ENCODE measurements at regions of chr2 and their contacts with region 1.

Region 1: GRCh38 chr2:157898591-157898996 is 22.5 kb upstream of the ACVR1 start:
- DNase-seq: peak; percentile 87
- H3K4me3 Mint-ChIP-seq: peak overlapping the region; percentile 76
- H3K27ac Mint-ChIP-seq: peak overlapping the region; percentile 99
- H3K4me1 Mint-ChIP-seq: peaks cover 77% of the 10 kb centered on the region
- H3K27me3 Mint-ChIP-seq: no peaks in the 10 kb centered on the region

Region 2: DNA sequence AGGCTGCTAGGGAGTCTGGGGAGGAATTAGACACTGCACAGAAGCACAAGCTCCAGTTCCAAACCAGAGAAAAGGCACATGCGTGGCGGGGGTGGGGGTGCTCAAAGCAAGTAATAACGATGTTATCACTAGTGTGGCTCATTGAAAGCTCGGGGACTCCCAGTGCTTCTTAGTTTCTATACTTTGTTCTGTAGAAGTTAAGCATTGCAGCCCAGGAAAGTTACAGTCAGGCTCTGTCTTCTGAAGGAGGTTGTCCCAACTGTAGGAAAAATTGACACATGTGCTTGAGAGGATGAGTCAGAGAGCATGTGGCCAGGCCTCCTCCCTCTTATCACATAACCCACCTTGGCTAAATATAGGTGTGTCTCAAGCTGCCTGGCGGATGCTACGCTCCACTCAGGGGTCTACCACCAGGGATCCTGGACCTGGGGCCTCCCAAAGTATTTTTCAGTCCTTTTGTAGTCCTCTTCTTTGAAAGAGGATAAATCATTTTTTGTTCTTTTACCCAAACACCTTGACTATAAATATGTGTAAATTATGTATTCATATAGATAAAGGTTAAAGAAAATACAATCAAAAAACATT is 637.3 kb before region 1 on chr2:
- CTCF ChIA-PET with region 1: no interaction called
- intact Hi-C with region 1: loop called (anchors 1 kb)
- DNase-seq: peak; percentile 83
- H3K4me3 Mint-ChIP-seq: no peak overlapping the region
- H3K27ac Mint-ChIP-seq: peak overlapping the region; percentile 2
- H3K4me1 Mint-ChIP-seq: peaks cover 25% of the 10 kb centered on the region
- H3K27me3 Mint-ChIP-seq: peaks cover 11% of the 10 kb centered on the region

Region 3: DNA sequence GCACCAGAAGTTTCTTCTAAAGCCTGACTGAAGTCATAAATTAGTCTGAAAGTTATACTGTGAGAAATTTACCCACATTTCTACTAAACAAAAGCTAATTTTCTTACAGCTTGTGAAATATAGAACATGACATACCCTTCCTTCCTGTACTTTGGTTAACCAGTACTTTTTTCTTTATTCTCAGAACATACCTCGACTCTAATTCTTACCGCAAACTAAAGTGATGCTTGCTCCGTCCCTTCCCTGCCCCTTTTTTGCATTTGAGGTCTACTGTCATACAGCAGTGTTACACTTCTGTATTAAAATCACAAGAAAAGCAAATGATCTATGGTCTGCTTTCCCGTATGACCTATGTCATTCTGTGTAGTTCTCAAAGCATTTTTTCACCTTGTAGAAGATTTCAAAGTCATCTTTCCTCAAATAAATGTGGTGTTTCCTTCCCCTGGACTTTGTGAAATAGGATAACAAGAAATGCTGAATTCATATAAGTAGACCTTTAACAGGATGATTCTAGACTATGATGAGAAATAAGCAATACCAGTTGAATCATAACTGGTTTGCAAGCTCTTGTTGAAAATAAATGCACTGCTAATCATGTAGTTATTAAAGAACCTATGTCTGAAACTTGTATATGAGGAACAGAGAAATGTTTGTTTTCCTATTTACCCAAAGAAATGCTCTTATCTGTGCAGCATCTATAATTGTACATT is 485.1 kb before region 1 on chr2:
- CTCF ChIA-PET with region 1: interaction called, 5 read pairs
- intact Hi-C with region 1: loop called (anchors 2 kb)
- DNase-seq: peak; percentile 78
- H3K4me3 Mint-ChIP-seq: peak overlapping the region; percentile 64
- H3K27ac Mint-ChIP-seq: peak overlapping the region; percentile 99
- H3K4me1 Mint-ChIP-seq: peaks cover 90% of the 10 kb centered on the region
- H3K27me3 Mint-ChIP-seq: no peaks in the 10 kb centered on the region

Region 4: GRCh38 chr2:157628477-157629415 is 269.8 kb before region 1 on chr2 and contains the start of gene ACVR1C:
- CTCF ChIA-PET with region 1: no interaction called
- intact Hi-C with region 1: loop called (anchors 1 kb)
- DNase-seq: peak; percentile 83
- H3K4me3 Mint-ChIP-seq: peak within 1 kb of the TSS; percentile 94
- H3K27ac Mint-ChIP-seq: no peak within 1 kb of the TSS
- H3K4me1 Mint-ChIP-seq: peaks cover 37% of the 10 kb centered on the region
- H3K27me3 Mint-ChIP-seq: peaks cover 2% of the 10 kb centered on the region
- total RNA-seq, gene ACVR1C: 3.5 to 3.6 TPM

Region 5: DNA sequence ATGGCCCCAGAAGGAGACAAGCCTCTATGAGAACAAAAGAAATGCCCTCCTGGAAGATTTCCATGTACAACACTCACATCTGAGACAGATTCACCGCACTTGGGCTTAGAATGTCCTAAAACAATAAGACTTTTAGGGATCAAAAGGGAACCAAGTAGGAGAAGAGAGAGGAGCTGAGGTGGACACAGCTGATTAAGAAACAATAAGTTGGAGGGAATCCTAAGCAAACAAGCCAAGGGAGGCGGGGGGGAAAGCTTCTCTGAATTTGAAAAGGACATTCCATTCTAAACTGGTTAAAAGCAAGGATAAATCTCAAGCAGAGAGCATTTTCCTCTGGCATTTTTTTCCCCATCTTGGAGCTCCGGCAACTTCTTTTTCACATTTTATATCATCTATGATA is 32.4 kb before region 1 on chr2:
- CTCF ChIA-PET with region 1: interaction called, 6 read pairs
- intact Hi-C with region 1: loop called (anchors 1 kb)
- DNase-seq: no peak
- H3K4me3 Mint-ChIP-seq: no peak overlapping the region
- H3K27ac Mint-ChIP-seq: no peak overlapping the region
- H3K4me1 Mint-ChIP-seq: peaks cover 57% of the 10 kb centered on the region
- H3K27me3 Mint-ChIP-seq: no peaks in the 10 kb centered on the region

Region 6: GRCh38 chr2:158456309-158457066 is 557.9 kb after region 1 on chr2 and contains the starts of genes CCDC148 and PKP4:
- CTCF ChIA-PET with region 1: no interaction called
- intact Hi-C with region 1: loop called (anchors 2 kb)
- DNase-seq: peak; percentile 94
- H3K4me3 Mint-ChIP-seq: peak within 1 kb of the TSS; percentile 95
- H3K27ac Mint-ChIP-seq: peak within 1 kb of the TSS; percentile 79
- H3K4me1 Mint-ChIP-seq: peaks cover 24% of the 10 kb centered on the region
- H3K27me3 Mint-ChIP-seq: no peaks in the 10 kb centered on the region
- total RNA-seq, gene CCDC148: not detected
- total RNA-seq, gene PKP4: 52.9 to 57.0 TPM